Activated CD4-positive, alpha-beta T cell treated with anti-CD3 and anti-CD28 coated beads for 36 hours (primary cell): ENCODE measurements at regions of chr3 and their contacts with region 1.

Region 1: DNA sequence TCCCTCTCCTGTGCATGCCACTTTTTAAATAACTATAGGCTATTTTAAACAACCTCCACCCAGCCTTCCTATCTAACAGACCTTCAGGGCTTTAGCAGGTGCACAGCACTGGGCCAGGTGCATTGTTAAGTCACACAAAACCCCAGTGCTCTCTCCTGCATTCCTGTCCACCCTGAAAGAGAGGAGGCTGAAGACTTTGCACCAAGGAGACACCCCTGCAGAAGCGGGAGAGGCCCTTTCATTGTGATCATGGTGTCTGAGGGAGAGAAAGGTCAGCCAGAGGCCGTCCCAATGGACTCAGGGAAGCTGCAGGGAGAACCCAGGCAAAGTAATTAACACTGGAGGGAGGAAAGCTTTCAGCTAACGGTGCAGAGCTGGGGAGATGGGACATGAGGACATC is 5.2 kb downstream of the LRIG1 start:
- DNase-seq: no peak
- ATAC-seq: no peak
- H3K4me3 Mint-ChIP-seq: no peak overlapping the region
- H3K27ac Mint-ChIP-seq: peak overlapping the region; percentile 48
- H3K4me1 Mint-ChIP-seq: peaks cover 79% of the 10 kb centered on the region
- H3K27me3 Mint-ChIP-seq: peaks cover 5% of the 10 kb centered on the region

Region 2: DNA sequence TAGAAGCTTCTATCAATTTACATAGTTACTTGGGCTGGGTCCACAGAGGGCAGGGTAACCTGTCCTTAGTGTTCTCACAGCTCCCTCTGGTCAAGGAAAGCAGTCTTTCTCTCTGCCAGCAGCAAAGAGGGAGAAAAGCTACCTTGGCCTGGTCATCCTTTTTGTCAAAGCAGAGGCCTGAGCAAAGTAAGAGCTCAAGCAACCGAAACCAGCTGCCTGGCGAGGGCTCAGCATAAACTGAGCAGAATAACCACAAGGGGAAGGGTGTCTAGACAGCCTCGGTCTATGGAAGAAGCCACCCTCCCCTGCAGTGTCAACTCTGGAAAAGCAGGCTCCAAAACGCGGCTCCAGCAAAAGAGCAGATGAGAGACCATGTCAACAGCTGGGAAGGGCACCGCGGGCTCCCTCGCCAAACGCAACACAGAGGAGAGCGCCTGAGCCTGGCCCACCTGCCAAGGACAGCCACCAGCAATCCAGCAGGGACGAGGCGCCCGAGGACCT is 12.2 kb before region 1 on chr3:
- CTCF ChIA-PET with region 1: interaction called, 6 read pairs
- POLR2A ChIA-PET with region 1: no interaction called
- intact Hi-C with region 1: loop called in 1 of 2 experiments (anchors 2 kb)
- DNase-seq: peak; percentile 32
- ATAC-seq: no peak
- H3K4me3 Mint-ChIP-seq: peak overlapping the region; percentile 4
- H3K27ac Mint-ChIP-seq: peak overlapping the region; percentile 8
- H3K4me1 Mint-ChIP-seq: peaks cover 86% of the 10 kb centered on the region
- H3K27me3 Mint-ChIP-seq: no peaks in the 10 kb centered on the region